ENCODE measurements at regions of chr17 and their contacts with region 1.

Region 1: GRCh38 chr17:44533533-44534246 is 23.6 kb upstream of the FZD2 start:
- DNase-seq: no peak
- H3K4me3 ChIP-seq: peak overlapping the region in 2 of 4 donors; percentile 19 to 43
- H3K27ac ChIP-seq: peak overlapping the region in 3 of 4 donors; percentile 47 to 64 (median 63)
- H3K4me1 ChIP-seq: peaks cover 6 to 11% (median 7%) of the 10 kb centered on the region in 3 donors
- H3K27me3 ChIP-seq: peaks cover 0 to 17% (median 0%) of the 10 kb centered on the region in 4 donors
- CTCF ChIP-seq: peak; percentile 90 to 94 (median 93)
- POLR2A ChIP-seq: no peak

Region 2: DNA sequence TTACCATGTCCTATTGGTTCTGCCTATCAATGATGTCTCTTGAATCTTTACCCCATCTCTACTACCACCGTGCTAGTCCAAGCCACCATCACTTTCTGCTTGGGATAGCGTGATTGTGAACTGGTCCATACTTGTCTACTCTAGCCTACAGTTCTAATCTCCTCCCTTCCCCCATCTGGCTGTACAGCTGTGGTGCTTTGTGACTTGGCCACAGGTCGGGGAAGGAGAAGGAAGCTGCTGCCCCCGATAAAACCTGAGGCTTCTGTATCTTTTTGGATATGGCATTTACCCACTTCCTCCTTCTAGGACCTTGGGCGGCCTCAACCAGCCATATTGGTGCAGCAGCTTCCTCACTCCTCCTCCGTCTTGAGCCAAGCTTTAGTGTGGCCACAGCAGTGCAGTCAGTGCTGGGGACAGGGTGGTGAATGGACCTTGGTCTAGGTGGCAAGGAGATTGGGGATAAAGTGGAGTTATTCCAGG is 143.9 kb before region 1 on chr17:
- intact Hi-C with region 1: loop called (anchors 10 kb)
- DNase-seq: no peak
- H3K4me3 ChIP-seq: no peak overlapping the region
- H3K27ac ChIP-seq: no peak overlapping the region
- H3K4me1 ChIP-seq: peaks cover 7 to 15% (median 10%) of the 10 kb centered on the region in 3 donors
- H3K27me3 ChIP-seq: peaks cover 0 to 13% (median 0%) of the 10 kb centered on the region in 4 donors
- CTCF ChIP-seq: no peak
- POLR2A ChIP-seq: no peak

Region 3: GRCh38 chr17:44636562-44636961 is 102.9 kb after region 1 on chr17:
- intact Hi-C with region 1: loop called (anchors 5 kb)
- DNase-seq: no peak
- H3K4me3 ChIP-seq: no peak overlapping the region
- H3K27ac ChIP-seq: no peak overlapping the region
- H3K4me1 ChIP-seq: no peaks in the 10 kb centered on the region
- H3K27me3 ChIP-seq: peaks cover 0 to 17% (median 0%) of the 10 kb centered on the region in 4 donors
- CTCF ChIP-seq: peak in 5 of 6 experiments; percentile 9 to 35 (median 27)
- POLR2A ChIP-seq: no peak

Region 4: GRCh38 chr17:44794851-44795413 is 261.2 kb after region 1 on chr17:
- intact Hi-C with region 1: no loop called
- DNase-seq: no peak
- H3K4me3 ChIP-seq: peak overlapping the region in 1 of 4 donors; percentile 48
- H3K27ac ChIP-seq: peak overlapping the region; percentile 39 to 81 (median 74)
- H3K4me1 ChIP-seq: peaks cover 0 to 25% (median 3%) of the 10 kb centered on the region in 3 donors
- H3K27me3 ChIP-seq: no peaks in the 10 kb centered on the region
- CTCF ChIP-seq: no peak
- POLR2A ChIP-seq: no peak